Activated T-helper 1 cell treated with anti-CD3 and anti-CD28 coated beads, Interleukin-12 subunit alpha, Interleukin-12 subunit beta, Interleukin-2, Interleukin-4 antibody, amounts not matched to agents 30 ng/mL and 10 ng/mL and 1 ng/mL, durations not matched to agents 14 hours and 24 hours and 36 hours (primary cell): ENCODE measurements at regions of chr1 and their contacts with region 1.

Region 1: GRCh38 chr1:153617675-153618074 is 1.6 kb upstream of the S100A14 start:
- DNase-seq: peak; percentile 63
- H3K4me3 Mint-ChIP-seq: no peak overlapping the region
- H3K27ac Mint-ChIP-seq: no peak overlapping the region
- H3K4me1 Mint-ChIP-seq: peaks cover 8% of the 10 kb centered on the region
- H3K27me3 Mint-ChIP-seq: no peaks in the 10 kb centered on the region

Region 2: DNA sequence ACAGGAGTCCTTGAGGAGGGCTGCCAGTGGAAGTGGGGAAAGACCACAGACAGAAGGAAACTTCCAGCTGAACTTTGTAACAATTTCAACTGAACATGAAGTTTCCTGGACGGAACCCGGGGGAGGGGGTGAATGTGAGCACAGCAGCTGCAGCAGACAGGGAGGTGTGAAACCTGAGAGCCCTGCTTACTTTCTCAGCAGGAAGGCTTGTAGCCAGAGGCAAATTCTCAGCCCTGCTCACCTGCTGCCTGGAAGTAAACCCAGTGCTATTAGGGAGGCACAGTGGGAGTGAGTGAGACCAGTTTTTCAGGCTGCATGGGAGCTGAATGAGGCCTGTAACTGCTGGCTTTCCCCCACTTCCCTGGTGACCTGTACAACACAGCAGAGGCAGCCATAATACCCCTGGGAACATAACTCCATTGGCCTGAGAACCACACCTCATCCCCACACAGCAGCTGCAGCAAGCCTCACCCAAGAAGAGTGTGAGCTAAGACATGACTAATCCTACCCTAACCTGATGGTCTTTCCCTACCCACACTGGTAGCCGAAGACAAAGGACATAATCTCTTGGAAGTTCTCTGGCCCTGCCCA is 494.7 kb before region 1 on chr1:
- intact Hi-C with region 1: no loop called
- DNase-seq: no peak
- H3K4me3 Mint-ChIP-seq: no peak overlapping the region
- H3K27ac Mint-ChIP-seq: no peak overlapping the region
- H3K4me1 Mint-ChIP-seq: no peaks in the 10 kb centered on the region
- H3K27me3 Mint-ChIP-seq: peaks cover 11% of the 10 kb centered on the region

Region 3: DNA sequence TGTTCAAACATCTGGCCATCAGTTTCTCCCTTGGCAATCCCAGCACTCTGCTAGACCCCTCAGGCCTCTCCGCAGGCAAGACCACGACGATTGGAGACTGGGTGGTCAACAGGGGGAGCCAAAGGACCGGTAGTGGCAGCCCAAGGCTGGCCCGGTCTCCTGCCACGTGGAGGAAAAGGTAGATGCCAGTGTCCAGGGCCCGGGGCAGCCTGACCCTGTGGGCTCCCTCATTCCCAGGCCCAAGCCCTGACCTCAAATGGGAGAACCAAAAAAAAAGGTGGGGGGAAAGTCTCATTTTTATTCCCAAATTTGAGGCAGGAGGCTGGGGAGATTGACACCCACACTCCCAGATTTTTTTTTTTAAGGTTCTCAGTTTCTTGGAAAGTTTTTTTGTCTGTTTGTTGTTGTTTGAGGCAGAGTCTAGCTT is 106.7 kb before region 1 on chr1:
- intact Hi-C with region 1: loop called (anchors 1 kb)
- DNase-seq: peak; percentile 65
- H3K4me3 Mint-ChIP-seq: no peak overlapping the region
- H3K27ac Mint-ChIP-seq: peak overlapping the region; percentile 55
- H3K4me1 Mint-ChIP-seq: peaks cover 21% of the 10 kb centered on the region
- H3K27me3 Mint-ChIP-seq: peaks cover 2% of the 10 kb centered on the region